Activated CD4-positive, alpha-beta memory T cell treated with anti-CD3 and anti-CD28 coated beads for 36 hours (primary cell): ENCODE measurements at regions of chr2 and their contacts with region 1.

Region 1: DNA sequence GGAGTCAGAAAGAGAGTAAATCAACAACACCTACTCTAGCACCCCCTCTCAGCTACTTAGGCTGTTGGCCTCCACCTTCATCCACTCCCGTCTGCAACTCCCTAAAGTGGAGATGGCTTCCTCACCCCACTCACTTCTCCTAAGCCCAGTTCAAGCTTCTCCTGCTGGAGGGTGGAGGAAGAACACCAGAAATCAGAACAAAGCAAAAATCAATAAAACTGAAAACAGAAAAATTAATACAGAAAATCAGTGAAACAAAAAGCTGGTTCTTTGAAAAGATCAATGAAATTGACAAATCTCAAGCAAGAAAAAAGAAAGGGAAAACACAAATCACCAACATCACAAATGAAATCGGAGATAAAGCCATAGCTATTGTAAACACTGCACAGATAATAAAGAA is 191.7 kb downstream of the ANAPC1 start:
- DNase-seq: no peak
- H3K4me3 Mint-ChIP-seq: no peak overlapping the region
- H3K27ac Mint-ChIP-seq: no peak overlapping the region
- H3K4me1 Mint-ChIP-seq: no peaks in the 10 kb centered on the region
- H3K27me3 Mint-ChIP-seq: peaks cover 15% of the 10 kb centered on the region

Region 2: DNA sequence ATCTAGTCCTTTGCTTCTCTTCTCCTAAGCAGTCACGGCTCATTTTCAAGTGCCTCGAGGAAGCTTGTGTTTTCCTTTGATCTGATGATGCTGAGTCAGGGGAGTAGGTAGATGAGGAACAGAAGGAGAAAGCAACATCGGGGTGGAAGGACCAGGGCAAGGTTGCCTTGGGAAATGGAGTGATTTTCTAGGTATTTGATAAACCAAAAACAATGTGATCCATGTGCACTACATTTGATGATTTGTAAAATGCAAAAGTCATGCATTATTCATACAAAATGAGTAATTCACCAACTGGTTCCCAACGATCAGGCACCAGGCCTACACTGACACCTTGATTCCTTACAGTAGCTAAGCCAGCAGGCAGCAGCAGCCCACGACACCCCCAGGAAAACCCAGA is 13.7 kb before region 1 on chr2:
- CTCF ChIA-PET with region 1: interaction called, 15 read pairs
- POLR2A ChIA-PET with region 1: no interaction called
- intact Hi-C with region 1: no loop called
- DNase-seq: no peak
- H3K4me3 Mint-ChIP-seq: no peak overlapping the region
- H3K27ac Mint-ChIP-seq: no peak overlapping the region
- H3K4me1 Mint-ChIP-seq: peaks cover 9% of the 10 kb centered on the region
- H3K27me3 Mint-ChIP-seq: peaks cover 18% of the 10 kb centered on the region

Region 3: GRCh38 chr2:112803691-112804521 is 1111.6 kb after region 1 on chr2:
- CTCF ChIA-PET with region 1: no interaction called
- POLR2A ChIA-PET with region 1: no interaction called
- intact Hi-C with region 1: no loop called
- DNase-seq: no peak
- H3K4me3 Mint-ChIP-seq: no peak overlapping the region
- H3K27ac Mint-ChIP-seq: peak overlapping the region; percentile 90
- H3K4me1 Mint-ChIP-seq: peaks cover 43% of the 10 kb centered on the region
- H3K27me3 Mint-ChIP-seq: no peaks in the 10 kb centered on the region